Heart right ventricle (tissue), 16 donors: ENCODE measurements at regions of chr15 and their contacts with region 1.

Region 1: GRCh38 chr15:96544162-96544756 is 213.8 kb downstream of the NR2F2 start:
- DNase-seq: no peak
- ATAC-seq: no peak
- H3K4me3 ChIP-seq: no peak overlapping the region
- H3K27ac ChIP-seq: no peak overlapping the region
- H3K4me1 ChIP-seq: no peaks in the 10 kb centered on the region
- H3K27me3 ChIP-seq: peaks cover 0 to 3% (median 0%) of the 10 kb centered on the region in 7 donors
- CTCF ChIP-seq: no peak

Region 2: GRCh38 chr15:96395696-96396095 is 148.6 kb before region 1 on chr15:
- intact Hi-C with region 1: no loop called
- DNase-seq: no peak
- ATAC-seq: no peak
- H3K4me3 ChIP-seq: no peak overlapping the region
- H3K27ac ChIP-seq: no peak overlapping the region
- H3K4me1 ChIP-seq: no peaks in the 10 kb centered on the region
- H3K27me3 ChIP-seq: peaks cover 0 to 10% (median 0%) of the 10 kb centered on the region in 7 donors
- CTCF ChIP-seq: no peak

Region 3: DNA sequence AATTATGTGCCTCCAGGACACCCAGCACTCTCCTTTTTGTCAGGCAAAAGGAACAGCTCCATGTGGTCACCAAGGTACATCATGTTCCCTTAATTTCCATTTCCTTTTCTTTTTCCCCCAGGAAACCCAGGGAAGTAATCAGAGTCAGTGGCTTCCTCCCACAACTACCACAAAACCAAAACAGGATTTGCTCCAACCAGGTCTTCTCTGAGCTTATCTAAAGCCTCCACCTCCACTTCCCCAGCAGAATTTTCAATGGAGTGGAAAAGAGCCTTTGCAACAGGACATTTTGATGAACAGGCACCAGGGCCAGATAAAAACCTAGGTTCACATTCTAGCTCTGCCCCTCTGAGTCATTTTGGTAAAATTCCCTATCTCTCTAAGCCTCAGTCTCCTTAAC is 59.4 kb before region 1 on chr15:
- intact Hi-C with region 1: loop called in 1 of 10 experiments (anchors 10 kb)
- DNase-seq: no peak
- ATAC-seq: no peak
- H3K4me3 ChIP-seq: no peak overlapping the region
- H3K27ac ChIP-seq: no peak overlapping the region
- H3K4me1 ChIP-seq: no peaks in the 10 kb centered on the region
- H3K27me3 ChIP-seq: peaks cover 0 to 19% (median 10%) of the 10 kb centered on the region in 7 donors
- CTCF ChIP-seq: no peak

Region 4: DNA sequence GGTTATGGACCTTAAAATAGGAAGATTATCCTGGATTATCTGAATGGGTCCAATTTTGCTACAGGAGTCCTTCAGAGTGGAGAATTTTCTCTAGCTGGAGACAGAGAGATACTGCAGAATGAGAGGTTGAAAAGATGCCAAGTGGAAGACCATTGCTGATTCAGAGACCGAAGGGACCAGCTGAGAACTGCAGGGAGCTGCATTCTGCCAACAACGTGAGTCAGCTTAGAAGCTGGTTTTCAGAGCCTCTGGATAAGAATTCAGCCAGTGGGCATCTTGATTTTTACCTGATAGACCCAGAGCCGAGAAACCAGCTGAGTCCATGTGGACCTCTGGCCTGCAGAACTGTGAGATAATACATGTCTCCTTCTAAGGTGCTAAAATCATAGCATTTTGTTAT is 20.3 kb after region 1 on chr15:
- intact Hi-C with region 1: loop called in 1 of 10 experiments (anchors 2 kb)
- DNase-seq: no peak
- ATAC-seq: no peak
- H3K4me3 ChIP-seq: no peak overlapping the region
- H3K27ac ChIP-seq: no peak overlapping the region
- H3K4me1 ChIP-seq: no peaks in the 10 kb centered on the region
- H3K27me3 ChIP-seq: no peaks in the 10 kb centered on the region
- CTCF ChIP-seq: no peak

Region 5: DNA sequence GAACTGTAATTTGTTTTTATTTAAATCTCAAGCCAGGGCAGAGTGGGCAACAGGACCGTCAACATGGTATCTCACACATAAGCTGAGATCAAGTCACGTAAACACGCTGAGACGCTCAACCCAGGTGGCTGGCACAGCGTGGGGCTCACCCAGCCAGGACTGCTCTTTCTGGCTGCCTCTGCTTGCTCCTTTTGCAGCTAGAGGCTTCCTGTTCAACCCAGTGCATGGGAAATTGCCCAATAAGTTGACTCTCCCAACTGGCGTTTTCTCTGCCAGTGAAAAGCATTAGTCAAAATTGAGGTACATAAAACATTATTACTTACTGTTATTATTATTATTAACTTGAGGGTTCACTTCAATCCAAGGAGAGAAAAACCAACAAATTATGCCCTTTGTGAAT is 184.3 kb after region 1 on chr15:
- intact Hi-C with region 1: no loop called
- DNase-seq: no peak
- ATAC-seq: no peak
- H3K4me3 ChIP-seq: no peak overlapping the region
- H3K27ac ChIP-seq: no peak overlapping the region
- H3K4me1 ChIP-seq: no peaks in the 10 kb centered on the region
- H3K27me3 ChIP-seq: peaks cover 0 to 18% (median 5%) of the 10 kb centered on the region in 7 donors
- CTCF ChIP-seq: no peak

Region 6: GRCh38 chr15:97126553-97127233 is 582.4 kb after region 1 on chr15:
- intact Hi-C with region 1: loop called in 1 of 10 experiments (anchors 5 kb)
- DNase-seq: no peak
- ATAC-seq: no peak
- H3K4me3 ChIP-seq: no peak overlapping the region
- H3K27ac ChIP-seq: no peak overlapping the region
- H3K4me1 ChIP-seq: no peaks in the 10 kb centered on the region
- H3K27me3 ChIP-seq: no peaks in the 10 kb centered on the region
- CTCF ChIP-seq: no peak